ENCODE measurements at regions of chr17 and their contacts with region 1.

Region 1: GRCh38 chr17:76446449-76447231 is 6.3 kb downstream of the UBE2O start:
- DNase-seq: no peak
- H3K4me3 ChIP-seq: peak overlapping the region in 1 of 2 experiments; percentile 34; a peak in 3 of 4 replicates
- H3K27ac ChIP-seq: peak overlapping the region; percentile 4 to 64
- H3K4me1 ChIP-seq: peaks cover 42 to 45% of the 10 kb centered on the region in 2 experiments
- H3K27me3 ChIP-seq: no peaks in the 10 kb centered on the region
- CTCF ChIP-seq: no peak
- EP300 ChIP-seq: no peak
- RAD21 ChIP-seq: no peak

Region 2: DNA sequence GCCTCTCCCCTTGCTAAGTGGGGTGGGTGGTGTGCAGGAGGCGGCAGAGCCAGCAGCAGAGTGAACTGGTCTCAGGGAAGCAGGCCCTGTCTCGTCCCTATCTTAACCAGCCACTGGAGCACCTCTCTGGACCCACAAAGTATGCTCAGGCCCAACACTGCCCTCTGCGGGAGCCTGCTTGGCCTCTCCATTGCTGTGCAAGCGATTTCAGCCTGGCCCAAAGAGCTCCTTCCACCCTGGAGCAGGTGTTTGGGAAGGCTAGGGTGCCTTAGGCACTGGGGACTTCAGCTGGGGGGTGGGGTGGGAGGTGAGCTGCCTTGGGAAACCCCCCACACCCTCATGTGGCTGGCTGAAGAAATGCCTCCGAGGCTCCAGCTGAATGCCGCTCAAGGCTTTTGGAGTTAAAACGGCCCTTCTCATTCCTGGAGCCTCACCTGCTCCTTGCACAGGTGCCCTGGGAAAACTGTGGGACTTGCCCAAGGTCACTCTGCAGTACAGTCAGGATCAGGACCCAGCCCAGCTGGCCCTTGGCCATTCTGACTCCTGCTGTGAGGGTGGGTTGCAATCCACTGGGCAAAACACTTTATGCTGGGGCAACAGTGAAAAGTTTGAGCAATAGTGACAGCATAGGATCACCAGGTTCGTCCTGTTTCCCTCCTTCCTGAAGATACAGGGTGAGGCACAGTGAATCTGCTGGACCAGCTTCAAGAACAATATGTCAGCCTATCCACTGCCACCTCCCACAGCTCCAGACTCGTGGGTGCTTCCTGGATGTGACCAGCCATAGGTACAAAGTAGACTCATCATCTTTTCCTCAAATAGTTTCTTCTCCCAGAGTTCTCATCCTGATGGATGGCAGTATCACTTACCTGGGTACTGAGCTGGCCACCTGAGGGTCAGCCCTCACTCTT is 12.2 kb after region 1 on chr17:
- CTCF ChIA-PET with region 1: interaction called, 1,687 read pairs
- POLR2A ChIA-PET with region 1: no interaction called
- DNase-seq: peak; percentile 79
- H3K4me3 ChIP-seq: no peak overlapping the region
- H3K27ac ChIP-seq: no peak overlapping the region
- H3K4me1 ChIP-seq: no peaks in the 10 kb centered on the region; a peak in 1 of 4 replicates
- H3K27me3 ChIP-seq: no peaks in the 10 kb centered on the region
- CTCF ChIP-seq: peak; percentile 51
- EP300 ChIP-seq: no peak
- RAD21 ChIP-seq: peak; percentile 81

Region 3: GRCh38 chr17:76567634-76568432 is 121.2 kb after region 1 on chr17:
- CTCF ChIA-PET with region 1: no interaction called
- POLR2A ChIA-PET with region 1: no interaction called
- DNase-seq: peak; percentile 45
- H3K4me3 ChIP-seq: no peak overlapping the region
- H3K27ac ChIP-seq: no peak overlapping the region; a peak in 1 of 4 replicates
- H3K4me1 ChIP-seq: peaks cover 1 to 8% of the 10 kb centered on the region in 2 experiments; a peak in 2 of 4 replicates
- H3K27me3 ChIP-seq: no peaks in the 10 kb centered on the region
- CTCF ChIP-seq: no peak
- EP300 ChIP-seq: no peak
- RAD21 ChIP-seq: no peak